ENCODE measurements at regions of chr15 and their contacts with region 1.

Region 1: GRCh38 chr15:41930221-41930866 is 36.5 kb upstream of the SPTBN5 start:
- DNase-seq: peak; percentile 53 to 61
- H3K4me3 ChIP-seq: no peak overlapping the region
- H3K4me3 Mint-ChIP-seq: no peak overlapping the region
- H3K27ac Mint-ChIP-seq: no peak overlapping the region
- H3K4me1 ChIP-seq: peaks cover 61% of the 10 kb centered on the region
- H3K4me1 Mint-ChIP-seq: peaks cover 62% of the 10 kb centered on the region
- H3K27me3 ChIP-seq: no peaks in the 10 kb centered on the region
- H3K27me3 Mint-ChIP-seq: no peaks in the 10 kb centered on the region
- CTCF ChIP-seq: peak in 1 of 2 experiments; percentile 12

Region 2: DNA sequence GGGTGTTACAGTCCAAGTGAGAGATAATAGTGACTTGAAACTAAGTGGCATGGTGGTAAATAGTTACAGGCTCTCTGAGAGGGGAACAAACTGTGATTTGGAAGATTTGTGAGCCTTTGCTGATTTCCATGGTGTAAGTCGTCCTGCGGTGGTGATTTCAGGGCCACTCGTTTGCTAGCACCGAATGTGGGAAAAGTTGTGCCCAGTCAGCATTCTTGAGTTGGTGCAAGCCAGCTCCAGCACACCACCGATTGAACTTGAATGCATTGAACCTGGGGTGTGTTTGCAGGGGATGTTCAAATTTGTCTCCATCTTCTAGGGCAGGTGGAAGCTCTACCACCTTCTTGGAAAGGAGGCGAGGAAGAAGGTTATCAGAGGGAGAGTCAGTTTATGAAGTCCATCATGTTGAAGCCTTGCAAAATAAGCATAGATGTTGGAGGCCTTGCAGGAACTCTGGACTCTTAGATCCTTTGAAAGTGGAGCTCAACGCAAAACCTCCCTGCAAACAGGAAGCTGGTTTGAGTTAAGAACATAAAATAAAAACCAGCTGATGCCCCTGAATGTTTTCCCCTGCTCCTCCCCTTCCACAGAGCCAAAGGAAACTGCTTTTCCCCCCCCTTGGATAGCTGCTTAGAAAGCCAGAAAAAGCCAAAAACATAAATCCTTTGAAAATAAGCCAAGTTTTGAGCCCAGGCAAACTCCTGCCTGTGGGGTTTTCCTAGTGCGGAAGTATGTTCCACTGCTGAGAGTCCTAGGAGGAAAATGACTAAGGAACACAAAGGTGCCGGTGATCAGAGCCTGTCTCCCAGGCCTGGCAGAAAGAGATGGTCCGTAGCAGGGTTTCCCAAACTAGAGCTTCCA is 134.1 kb before region 1 on chr15:
- CTCF ChIA-PET with region 1: no interaction called
- POLR2A ChIA-PET with region 1: no interaction called
- intact Hi-C with region 1: no loop called
- DNase-seq: no peak
- H3K4me3 ChIP-seq: no peak overlapping the region
- H3K4me3 Mint-ChIP-seq: no peak overlapping the region
- H3K27ac Mint-ChIP-seq: no peak overlapping the region
- H3K4me1 ChIP-seq: peaks cover 25% of the 10 kb centered on the region
- H3K4me1 Mint-ChIP-seq: peaks cover 13% of the 10 kb centered on the region
- H3K27me3 ChIP-seq: no peaks in the 10 kb centered on the region
- H3K27me3 Mint-ChIP-seq: no peaks in the 10 kb centered on the region
- CTCF ChIP-seq: no peak

Region 3: GRCh38 chr15:41944313-41944940 is 14.1 kb after region 1 on chr15:
- CTCF ChIA-PET with region 1: interaction called, 3 read pairs
- POLR2A ChIA-PET with region 1: interaction called, 4 read pairs
- intact Hi-C with region 1: loop called (anchors 2 kb)
- DNase-seq: peak; percentile 59 to 64
- H3K4me3 ChIP-seq: no peak overlapping the region
- H3K4me3 Mint-ChIP-seq: peak overlapping the region; percentile 47
- H3K27ac Mint-ChIP-seq: peak overlapping the region; percentile 82
- H3K4me1 ChIP-seq: peaks cover 53% of the 10 kb centered on the region
- H3K4me1 Mint-ChIP-seq: peaks cover 36% of the 10 kb centered on the region
- H3K27me3 ChIP-seq: no peaks in the 10 kb centered on the region
- H3K27me3 Mint-ChIP-seq: no peaks in the 10 kb centered on the region
- CTCF ChIP-seq: no peak

Region 4: GRCh38 chr15:41957021-41957897 is 26.9 kb after region 1 on chr15:
- CTCF ChIA-PET with region 1: no interaction called
- POLR2A ChIA-PET with region 1: no interaction called
- intact Hi-C with region 1: loop called (anchors 2 kb)
- DNase-seq: no peak
- H3K4me3 ChIP-seq: no peak overlapping the region
- H3K4me3 Mint-ChIP-seq: no peak overlapping the region
- H3K27ac Mint-ChIP-seq: peak overlapping the region; percentile 75
- H3K4me1 ChIP-seq: peaks cover 34% of the 10 kb centered on the region
- H3K4me1 Mint-ChIP-seq: peaks cover 30% of the 10 kb centered on the region
- H3K27me3 ChIP-seq: no peaks in the 10 kb centered on the region
- H3K27me3 Mint-ChIP-seq: no peaks in the 10 kb centered on the region
- CTCF ChIP-seq: no peak

Region 5: DNA sequence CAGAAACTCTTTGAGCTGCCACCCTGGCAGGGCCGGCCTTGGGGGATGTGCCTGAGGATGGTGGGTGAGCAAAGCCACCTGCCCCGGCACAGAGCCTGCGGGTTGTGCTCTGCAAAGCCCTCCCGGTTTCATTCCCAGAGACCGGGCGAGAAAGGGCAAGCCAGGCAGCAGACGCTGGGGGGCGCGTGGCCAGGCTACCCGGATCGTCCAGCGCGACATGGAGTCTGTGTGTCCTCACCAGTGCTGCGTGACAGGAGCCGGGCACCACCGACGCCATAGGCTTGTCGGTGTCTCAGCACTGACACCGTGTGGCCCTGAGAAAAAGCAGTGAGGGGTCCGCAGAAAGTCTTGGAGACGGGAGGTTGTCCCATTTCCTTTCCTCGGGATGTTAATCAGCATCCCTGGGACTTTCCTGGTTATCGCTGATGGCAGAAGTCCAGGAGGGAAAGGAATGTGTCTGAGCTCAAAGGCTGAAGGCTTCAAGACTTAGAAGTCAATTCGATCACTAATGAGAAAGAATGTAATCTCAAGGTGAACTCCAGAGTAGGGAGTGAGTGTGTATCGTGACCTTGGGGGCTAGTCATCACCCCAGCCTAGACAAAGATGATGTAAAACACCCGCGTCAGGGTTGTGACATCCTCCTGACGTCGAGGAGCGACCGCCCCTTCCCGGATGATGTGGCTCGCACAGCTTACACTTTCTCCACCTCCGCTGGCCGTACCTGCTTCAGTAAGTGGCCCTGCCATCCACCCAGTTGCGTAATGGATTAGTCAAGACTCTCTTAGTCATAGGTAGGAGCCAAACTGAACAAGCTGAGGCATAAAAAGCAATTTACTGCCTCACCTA is 126.8 kb after region 1 on chr15:
- CTCF ChIA-PET with region 1: no interaction called
- POLR2A ChIA-PET with region 1: interaction called, 9 read pairs
- intact Hi-C with region 1: loop called (anchors 5 kb)
- DNase-seq: peak; percentile 92 to 96
- H3K4me3 ChIP-seq: peak overlapping the region; percentile 33
- H3K4me3 Mint-ChIP-seq: peak overlapping the region; percentile 76
- H3K27ac Mint-ChIP-seq: peak overlapping the region; percentile 93
- H3K4me1 ChIP-seq: peaks cover 19% of the 10 kb centered on the region
- H3K4me1 Mint-ChIP-seq: peaks cover 7% of the 10 kb centered on the region
- H3K27me3 ChIP-seq: no peaks in the 10 kb centered on the region
- H3K27me3 Mint-ChIP-seq: no peaks in the 10 kb centered on the region
- CTCF ChIP-seq: peak; percentile 73 to 87